Posterior vena cava (tissue), 2 donors: ENCODE measurements at regions of chr5 and their contacts with region 1.

Region 1: DNA sequence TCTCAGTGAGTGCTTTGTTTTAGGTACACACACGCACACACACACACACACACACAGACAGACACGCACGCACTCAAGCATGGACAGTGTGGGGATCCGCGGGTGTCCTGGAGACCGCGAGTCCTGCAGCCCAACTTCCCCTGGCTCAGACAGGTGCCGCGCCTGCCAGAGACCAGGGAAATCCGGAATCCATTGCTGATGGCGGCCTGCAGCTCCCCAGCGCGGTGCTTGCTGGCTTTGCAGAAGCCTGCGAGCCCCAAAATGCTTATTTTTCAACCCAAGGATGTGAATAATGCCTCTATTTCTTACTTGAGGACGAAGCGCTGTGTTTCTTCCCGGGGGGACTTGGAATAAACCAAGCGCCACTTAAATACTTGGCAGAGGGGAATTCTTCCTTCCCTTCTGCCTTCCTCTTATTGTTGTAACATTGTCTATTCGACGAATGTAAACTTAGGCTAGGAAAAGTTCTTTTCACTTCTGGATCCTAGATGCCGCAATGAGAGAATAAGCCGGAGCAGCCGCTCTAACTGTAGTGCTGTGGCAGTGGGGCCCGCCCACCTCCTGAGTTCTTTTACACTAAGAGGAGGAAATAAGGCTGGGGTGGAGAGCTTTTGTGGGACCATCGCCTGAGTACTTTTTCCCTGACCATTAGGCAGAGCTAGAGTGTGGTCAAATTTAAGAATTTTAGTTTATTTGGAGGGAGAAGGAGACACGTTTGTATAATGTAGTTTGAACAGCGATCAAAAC is 802 bp downstream of the ITGA2 start:
- DNase-seq: peak; percentile 84

Region 2: DNA sequence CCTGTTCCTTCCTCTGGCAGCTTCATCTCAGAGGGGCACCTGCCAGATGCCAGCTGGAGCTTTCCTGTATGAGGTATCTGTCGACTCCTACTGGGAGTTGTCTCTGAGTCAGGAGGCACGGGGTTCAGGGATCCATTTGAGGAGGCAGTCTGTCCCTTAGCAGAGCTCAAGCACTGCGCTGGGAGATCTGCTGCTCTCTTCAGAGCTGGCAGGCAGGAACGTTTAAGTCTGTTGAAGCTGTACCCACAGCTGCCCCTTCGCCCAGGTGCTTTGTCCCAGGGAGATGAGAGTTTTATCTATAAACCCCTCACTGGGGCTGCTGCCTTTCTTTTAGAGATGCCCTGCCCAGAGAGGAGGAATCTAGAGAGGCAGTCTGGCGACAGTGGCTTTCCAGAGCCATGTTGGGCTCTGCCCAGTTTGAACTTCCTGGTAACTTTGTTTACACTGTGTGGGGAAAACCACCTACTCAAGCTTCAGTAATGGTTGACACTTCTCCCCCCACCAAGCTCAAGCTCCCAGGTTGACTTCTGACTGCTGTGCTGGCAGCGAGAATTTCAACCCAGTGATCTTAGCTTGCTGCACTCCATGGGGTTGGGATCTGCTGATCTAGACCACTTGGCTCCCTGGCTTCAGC is 12.6 kb before region 1 on chr5:
- intact Hi-C with region 1: loop called in 1 of 2 experiments (anchors 1 kb)
- DNase-seq: no peak

Region 3: DNA sequence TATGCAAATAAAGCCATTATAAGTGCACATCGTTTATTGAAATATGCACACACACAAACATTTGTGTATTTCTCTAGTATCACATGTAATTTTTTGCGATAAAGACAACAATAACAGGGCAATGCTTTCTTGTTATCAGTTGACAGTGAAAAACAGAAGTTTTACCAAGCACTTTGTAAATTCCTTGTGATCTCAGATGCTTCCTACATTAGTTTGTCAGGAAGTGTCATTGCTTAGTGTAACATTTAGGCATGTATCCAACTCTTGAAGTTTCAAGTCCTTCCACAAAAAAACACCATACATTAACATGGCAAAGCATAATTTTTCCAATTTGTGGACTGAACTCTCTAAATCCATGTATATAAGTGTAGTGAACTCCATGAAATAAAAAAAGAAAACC is 73.2 kb after region 1 on chr5:
- intact Hi-C with region 1: no loop called
- DNase-seq: no peak